Mammary epithelial cell (primary cell): ENCODE measurements at regions of chr19 and their contacts with region 1.

Region 1: GRCh38 chr19:16584248-16585141 is 12.3 kb upstream of the SLC35E1 start:
- DNase-seq: peak; percentile 75
- H3K4me3 ChIP-seq: no peak overlapping the region
- H3K27ac ChIP-seq: no peak overlapping the region
- H3K4me1 ChIP-seq: peaks cover 74% of the 10 kb centered on the region
- H3K27me3 ChIP-seq: no peaks in the 10 kb centered on the region
- CTCF ChIP-seq: no peak

Region 2: GRCh38 chr19:16470911-16471811 is 113.3 kb before region 1 on chr19:
- CTCF ChIA-PET with region 1: no interaction called
- dilution Hi-C with region 1: no loop called
- in situ Hi-C with region 1: no loop called
- intact Hi-C with region 1: no loop called
- DNase-seq: peak; percentile 53
- H3K4me3 ChIP-seq: peak overlapping the region; percentile 67 to 87 (median 70)
- H3K27ac ChIP-seq: peak overlapping the region; percentile 40
- H3K4me1 ChIP-seq: peaks cover 13% of the 10 kb centered on the region
- H3K27me3 ChIP-seq: no peaks in the 10 kb centered on the region
- CTCF ChIP-seq: no peak

Region 3: GRCh38 chr19:16495982-16496612 is 88.4 kb before region 1 on chr19 and contains the starts of genes C19orf44 and CALR3:
- CTCF ChIA-PET with region 1: no interaction called
- dilution Hi-C with region 1: no loop called
- in situ Hi-C with region 1: no loop called
- intact Hi-C with region 1: no loop called
- DNase-seq: peak; percentile 99
- H3K4me3 ChIP-seq: peak within 1 kb of the TSS; percentile 74 to 99 (median 84)
- H3K27ac ChIP-seq: peak within 1 kb of the TSS; percentile 54
- H3K4me1 ChIP-seq: peaks cover 7% of the 10 kb centered on the region
- H3K27me3 ChIP-seq: no peaks in the 10 kb centered on the region
- CTCF ChIP-seq: peak in 1 of 2 donors; percentile 17
- total RNA-seq, gene C19orf44: 4.8 to 5.8 TPM
- total RNA-seq, gene CALR3: not detected

Region 4: DNA sequence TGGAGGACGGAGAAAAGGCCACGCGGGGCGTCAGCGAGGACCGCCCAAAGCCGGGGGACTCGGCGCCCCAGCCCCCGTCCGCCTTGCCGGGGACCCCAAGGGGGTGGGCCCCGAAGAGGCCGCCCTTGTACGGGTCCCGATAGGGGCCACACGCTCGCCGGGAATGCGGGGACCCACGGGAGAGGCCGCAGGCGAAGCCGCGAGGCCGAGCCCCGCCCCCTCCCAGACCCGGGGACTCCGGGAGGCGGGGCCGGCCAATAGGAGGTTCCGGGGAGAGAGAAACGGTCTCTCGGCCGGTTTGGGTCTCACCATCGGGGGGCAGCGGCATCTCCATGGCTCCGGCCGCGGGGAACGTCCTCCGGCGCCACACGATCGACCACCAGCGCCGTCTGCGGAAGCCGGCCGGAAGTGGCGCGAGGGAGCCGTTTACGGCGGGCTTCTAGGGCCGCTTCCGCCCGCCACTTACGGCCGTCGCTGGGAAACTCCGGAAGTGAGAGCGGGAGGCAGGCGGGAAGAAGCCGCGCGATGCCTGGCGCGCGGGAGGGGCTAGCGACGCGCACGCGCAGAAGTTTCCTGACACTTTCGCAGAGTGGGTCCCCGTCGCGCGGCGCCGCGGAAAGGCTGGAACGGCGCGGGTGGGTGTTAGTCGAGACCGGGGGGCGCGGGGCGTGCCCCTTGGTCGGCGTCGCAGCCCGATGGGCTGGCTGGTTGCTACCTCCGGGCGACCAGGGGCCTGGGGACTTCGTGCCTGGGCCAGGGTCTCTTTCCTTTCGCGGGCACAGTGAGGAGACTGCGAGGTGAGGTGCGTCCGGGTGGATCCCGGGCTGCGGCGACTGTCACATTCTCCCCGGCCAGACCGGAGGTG is 42.2 kb before region 1 on chr19 and contains the start of gene CHERP:
- CTCF ChIA-PET with region 1: no interaction called
- dilution Hi-C with region 1: loop called (anchors 5 kb)
- in situ Hi-C with region 1: no loop called
- intact Hi-C with region 1: loop called (anchors 1 kb)
- DNase-seq: peak; percentile 90
- H3K4me3 ChIP-seq: peak within 1 kb of the TSS; percentile 73 to 96 (median 88)
- H3K27ac ChIP-seq: peak within 1 kb of the TSS; percentile 78
- H3K4me1 ChIP-seq: peaks cover 6% of the 10 kb centered on the region
- H3K27me3 ChIP-seq: no peaks in the 10 kb centered on the region
- CTCF ChIP-seq: no peak
- total RNA-seq, gene CHERP: 5.7 to 49.6 TPM

Region 5: GRCh38 chr19:16628183-16628983 is 43.9 kb after region 1 on chr19 and contains the start of gene MED26:
- CTCF ChIA-PET with region 1: no interaction called
- dilution Hi-C with region 1: no loop called
- in situ Hi-C with region 1: no loop called
- intact Hi-C with region 1: no loop called
- DNase-seq: peak; percentile 91
- H3K4me3 ChIP-seq: peak within 1 kb of the TSS; percentile 80 to 93 (median 83)
- H3K27ac ChIP-seq: peak within 1 kb of the TSS; percentile 80
- H3K4me1 ChIP-seq: peaks cover 13% of the 10 kb centered on the region
- H3K27me3 ChIP-seq: no peaks in the 10 kb centered on the region
- CTCF ChIP-seq: peak in 1 of 2 donors; percentile 22
- total RNA-seq, gene MED26: 8.8 to 10.9 TPM